HEK293 (cell line): ENCODE measurements at regions of chr6 and their contacts with region 1.

Region 1: GRCh38 chr6:28136585-28137504 is 4.8 kb upstream of the ZKSCAN8 start:
- H3K4me3 ChIP-seq: peak overlapping the region; percentile 92
- H3K27ac ChIP-seq: peak overlapping the region; percentile 77
- H3K4me1 ChIP-seq: peaks cover 10% of the 10 kb centered on the region; the same call in 1 of the 2 replicates
- CTCF ChIP-seq: peak; percentile 34; the same call in 1 of the 2 replicates

Region 2: GRCh38 chr6:27977387-27977786 is 159.5 kb before region 1 on chr6:
- CTCF ChIA-PET with region 1: no interaction called
- POLR2A ChIA-PET with region 1: no interaction called
- H3K4me3 ChIP-seq: no peak overlapping the region
- H3K27ac ChIP-seq: no peak overlapping the region
- H3K4me1 ChIP-seq: no peaks in the 10 kb centered on the region
- CTCF ChIP-seq: no peak

Region 3: DNA sequence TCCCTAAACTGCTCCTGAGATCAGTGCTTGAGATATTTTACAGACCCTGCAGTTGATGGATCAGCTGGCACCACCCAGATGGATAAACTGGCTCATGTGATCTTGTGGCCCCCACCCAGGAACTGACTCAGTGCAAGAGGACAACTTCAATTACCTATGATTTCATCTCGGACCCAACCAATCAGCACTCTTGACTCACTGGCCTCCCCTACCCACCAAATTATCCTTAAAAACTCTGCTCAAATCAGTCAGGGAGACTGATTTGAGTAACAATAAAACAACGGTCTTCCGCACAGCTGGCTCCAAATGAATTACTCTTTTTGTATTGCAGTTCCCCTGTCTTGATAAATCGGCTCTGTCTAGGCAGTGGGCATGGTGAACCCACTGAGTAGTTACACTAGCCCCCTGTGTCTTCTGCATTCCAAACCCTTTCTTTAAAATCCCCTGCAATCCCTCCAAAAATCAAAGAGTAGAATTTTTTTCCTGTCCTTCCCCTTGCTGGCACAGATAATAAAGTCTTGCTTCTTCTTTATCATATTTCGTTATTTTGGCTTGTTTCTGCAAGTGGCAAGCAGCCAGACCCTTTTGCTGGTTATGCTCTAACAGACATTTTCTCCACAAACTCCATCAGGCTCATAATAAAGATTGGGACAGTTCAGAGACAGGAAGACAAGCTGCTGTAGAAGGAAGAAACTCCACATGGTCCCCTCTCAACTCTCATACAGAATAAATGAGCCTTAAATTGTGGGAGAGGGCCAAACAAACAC is 131.5 kb before region 1 on chr6:
- CTCF ChIA-PET with region 1: no interaction called
- POLR2A ChIA-PET with region 1: no interaction called
- H3K4me3 ChIP-seq: no peak overlapping the region
- H3K27ac ChIP-seq: no peak overlapping the region
- H3K4me1 ChIP-seq: no peaks in the 10 kb centered on the region
- CTCF ChIP-seq: no peak

Region 4: GRCh38 chr6:28124102-28124970 is 12.5 kb before region 1 on chr6 and contains the start of gene ZSCAN16:
- CTCF ChIA-PET with region 1: interaction called, 4 read pairs
- POLR2A ChIA-PET with region 1: interaction called, 59 read pairs
- H3K4me3 ChIP-seq: peak within 1 kb of the TSS; percentile 76
- H3K27ac ChIP-seq: peak within 1 kb of the TSS; percentile 42; the same call in 1 of the 2 replicates
- H3K4me1 ChIP-seq: peaks cover 6% of the 10 kb centered on the region; the same call in 1 of the 2 replicates
- CTCF ChIP-seq: no peak

Region 5: GRCh38 chr6:28218271-28219248 is 81.7 kb after region 1 on chr6:
- CTCF ChIA-PET with region 1: interaction called, 3 read pairs
- POLR2A ChIA-PET with region 1: interaction called, 14 read pairs
- H3K4me3 ChIP-seq: peak overlapping the region; percentile 67
- H3K27ac ChIP-seq: peak overlapping the region; percentile 63; the same call in 1 of the 2 replicates
- H3K4me1 ChIP-seq: no peaks in the 10 kb centered on the region; the same call in 1 of the 2 replicates
- CTCF ChIP-seq: no peak

Region 6: DNA sequence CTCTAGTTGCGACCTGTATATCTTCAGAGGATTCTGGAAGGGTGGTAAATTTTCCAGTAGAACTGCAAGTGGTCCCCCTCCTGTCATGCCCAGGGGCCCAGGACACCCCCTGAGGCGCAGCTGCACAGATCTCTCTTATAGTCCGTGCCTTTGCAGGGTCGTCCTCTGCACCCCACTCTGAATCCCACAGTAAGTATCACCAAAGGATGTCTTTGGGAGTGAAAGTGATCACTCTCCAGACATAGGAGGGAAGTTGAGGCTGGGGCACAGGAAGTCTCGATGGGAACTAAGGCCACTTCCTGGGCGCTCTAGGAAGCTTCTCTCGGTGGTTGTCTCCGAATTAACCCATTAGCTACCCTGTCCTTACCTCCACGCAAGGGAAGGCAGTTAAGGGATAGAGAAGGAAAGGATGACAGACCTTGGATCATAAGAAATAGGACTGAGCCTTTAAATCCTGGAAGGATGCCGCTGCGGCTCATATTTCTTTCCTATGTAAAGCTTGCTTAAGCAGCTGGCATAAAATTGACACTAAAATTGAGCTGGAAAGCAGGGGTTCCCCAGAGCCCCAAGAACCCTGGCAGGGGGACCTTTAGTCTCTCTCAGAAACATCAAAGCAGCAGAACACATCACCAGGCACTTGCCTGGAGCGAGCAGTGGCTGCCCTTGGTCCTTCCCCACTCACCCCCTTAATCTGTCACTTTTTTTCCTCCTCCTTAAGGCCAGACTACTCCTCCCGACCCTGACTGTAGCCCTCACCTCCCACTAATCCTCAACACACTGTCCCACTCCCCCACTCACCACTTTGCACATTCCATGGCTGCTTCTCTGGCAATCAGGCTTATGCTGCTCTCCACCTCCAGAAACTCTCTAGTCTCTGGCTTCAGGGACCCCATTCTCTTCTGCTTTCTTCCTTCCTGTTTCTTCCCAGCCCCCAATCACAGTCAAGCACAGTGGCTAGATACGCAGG is 115.4 kb after region 1 on chr6 and contains the start of gene ZKSCAN4:
- CTCF ChIA-PET with region 1: interaction called, 7 read pairs
- POLR2A ChIA-PET with region 1: interaction called, 27 read pairs
- H3K4me3 ChIP-seq: peak within 1 kb of the TSS; percentile 74
- H3K27ac ChIP-seq: peak within 1 kb of the TSS; percentile 20; the same call in 1 of the 2 replicates
- H3K4me1 ChIP-seq: peaks cover 5% of the 10 kb centered on the region; the same call in 1 of the 2 replicates
- CTCF ChIP-seq: no peak

Region 7: DNA sequence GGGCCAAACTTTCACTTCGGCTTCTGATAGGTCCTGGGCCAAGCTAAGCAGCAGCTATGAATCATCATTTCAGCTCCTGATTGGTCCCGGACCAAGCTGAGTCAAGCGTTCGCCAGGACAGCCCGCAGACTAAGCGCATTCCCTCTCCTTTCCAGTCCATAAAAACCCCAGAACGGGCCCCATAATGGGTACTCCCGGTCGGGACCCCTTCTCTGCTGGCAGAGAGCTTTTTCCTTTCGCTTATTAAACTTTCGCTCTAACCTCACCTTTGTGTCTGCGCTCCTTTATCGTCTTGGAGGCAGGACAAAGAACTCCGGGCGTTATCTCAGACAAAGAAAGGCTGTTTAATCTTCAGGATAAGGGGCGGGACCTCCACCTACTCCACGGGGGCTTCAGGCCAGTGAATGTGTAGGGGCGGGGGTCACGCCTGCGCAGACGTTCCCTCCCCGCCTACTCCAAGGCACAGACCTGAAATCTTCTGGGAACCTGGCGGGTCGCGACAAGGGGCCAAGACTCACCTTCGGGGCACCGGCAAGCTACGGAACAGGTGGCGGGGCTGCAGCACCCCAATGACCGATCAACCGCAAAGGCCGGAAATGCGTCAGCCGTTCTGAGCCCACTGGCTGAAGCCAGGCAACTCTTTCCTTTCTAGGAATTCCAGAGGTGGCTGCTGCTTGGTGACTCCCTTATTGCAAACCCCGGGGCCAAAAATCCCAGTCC is 198.9 kb after region 1 on chr6 and contains the start of gene ZSCAN31:
- CTCF ChIA-PET with region 1: no interaction called
- POLR2A ChIA-PET with region 1: interaction called, 19 read pairs
- H3K4me3 ChIP-seq: peak within 1 kb of the TSS; percentile 78
- H3K27ac ChIP-seq: peak within 1 kb of the TSS; percentile 88
- H3K4me1 ChIP-seq: peaks cover 4% of the 10 kb centered on the region; the same call in 1 of the 2 replicates
- CTCF ChIP-seq: no peak

Region 8: GRCh38 chr6:28606424-28607400 is 469.9 kb after region 1 on chr6:
- CTCF ChIA-PET with region 1: no interaction called
- POLR2A ChIA-PET with region 1: no interaction called
- H3K4me3 ChIP-seq: peak overlapping the region; percentile 43
- H3K27ac ChIP-seq: peak overlapping the region; percentile 71
- H3K4me1 ChIP-seq: peaks cover 5% of the 10 kb centered on the region; the same call in 1 of the 2 replicates
- CTCF ChIP-seq: peak; percentile 59; the same call in 1 of the 2 replicates

Region 9: GRCh38 chr6:28707387-28708282 is 570.8 kb after region 1 on chr6:
- CTCF ChIA-PET with region 1: no interaction called
- POLR2A ChIA-PET with region 1: interaction called, 10 read pairs
- H3K4me3 ChIP-seq: no peak overlapping the region
- H3K27ac ChIP-seq: no peak overlapping the region
- H3K4me1 ChIP-seq: no peaks in the 10 kb centered on the region
- CTCF ChIP-seq: no peak